ENCODE measurements at regions of chr10 and their contacts with region 1.

Region 1: DNA sequence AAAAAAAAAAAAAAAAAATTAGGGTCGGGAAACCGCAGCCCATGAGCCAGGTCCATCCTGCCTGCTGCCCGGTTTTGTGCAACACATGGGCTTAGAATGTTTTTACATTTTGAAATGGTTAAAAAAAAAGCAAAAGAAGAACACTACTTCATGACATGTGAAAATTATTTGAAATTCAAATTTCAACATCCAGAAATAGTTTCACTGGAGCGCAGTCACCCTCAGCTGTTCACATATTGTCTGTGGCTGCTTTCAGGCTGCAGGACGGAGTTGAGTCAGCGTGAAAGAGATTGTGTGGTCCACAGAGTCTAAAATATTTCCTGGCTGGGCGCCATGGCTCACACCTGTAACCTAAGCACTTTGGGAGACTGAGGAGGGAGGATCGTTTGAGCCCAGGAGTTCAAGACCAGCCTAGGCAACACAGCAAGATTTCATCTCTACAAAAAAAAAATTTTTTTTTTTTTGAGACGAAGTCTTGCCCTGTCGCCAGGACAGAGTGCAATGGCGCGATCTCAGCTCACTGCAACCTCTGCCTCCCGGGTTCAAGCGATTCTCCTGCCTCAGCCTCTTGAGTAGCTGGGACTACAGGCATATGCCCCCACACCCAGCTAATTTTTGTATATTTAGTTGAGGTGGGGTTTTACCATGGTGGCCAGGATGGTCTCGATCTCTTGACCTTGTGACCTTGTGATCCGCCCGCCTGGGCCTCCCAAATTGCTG is 63.9 kb upstream of the ECHDC3 start:
- DNase-seq: peak in 1 of 2 experiments; percentile 45
- H3K4me3 ChIP-seq: no peak overlapping the region
- H3K27ac ChIP-seq: no peak overlapping the region
- H3K4me1 ChIP-seq: no peaks in the 10 kb centered on the region
- H3K27me3 ChIP-seq: no peaks in the 10 kb centered on the region
- CTCF ChIP-seq: no peak

Region 2: DNA sequence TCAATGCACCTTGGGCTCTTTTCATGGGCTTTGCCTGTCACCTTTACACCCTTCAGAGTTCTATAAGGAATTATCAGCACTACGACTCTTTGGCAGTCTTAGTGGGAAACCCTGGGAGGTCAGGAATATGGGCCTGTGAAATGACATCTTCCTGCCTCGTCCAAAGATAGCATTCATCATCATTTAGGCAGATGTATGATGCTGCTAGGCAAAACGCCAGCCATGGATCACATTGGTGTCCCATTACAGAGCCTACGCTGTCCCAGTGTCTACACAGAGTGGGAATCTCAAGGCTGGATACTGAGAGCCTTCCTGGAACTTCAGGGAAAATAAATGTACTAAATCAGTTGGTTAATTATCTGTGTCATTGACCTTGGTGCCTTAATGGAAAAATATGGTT is 919.9 kb before region 1 on chr10:
- CTCF ChIA-PET with region 1: interaction called, 15 read pairs
- POLR2A ChIA-PET with region 1: no interaction called
- intact Hi-C with region 1: no loop called
- DNase-seq: no peak
- H3K4me3 ChIP-seq: no peak overlapping the region
- H3K27ac ChIP-seq: no peak overlapping the region
- H3K4me1 ChIP-seq: no peaks in the 10 kb centered on the region
- H3K27me3 ChIP-seq: no peaks in the 10 kb centered on the region
- CTCF ChIP-seq: no peak

Region 3: DNA sequence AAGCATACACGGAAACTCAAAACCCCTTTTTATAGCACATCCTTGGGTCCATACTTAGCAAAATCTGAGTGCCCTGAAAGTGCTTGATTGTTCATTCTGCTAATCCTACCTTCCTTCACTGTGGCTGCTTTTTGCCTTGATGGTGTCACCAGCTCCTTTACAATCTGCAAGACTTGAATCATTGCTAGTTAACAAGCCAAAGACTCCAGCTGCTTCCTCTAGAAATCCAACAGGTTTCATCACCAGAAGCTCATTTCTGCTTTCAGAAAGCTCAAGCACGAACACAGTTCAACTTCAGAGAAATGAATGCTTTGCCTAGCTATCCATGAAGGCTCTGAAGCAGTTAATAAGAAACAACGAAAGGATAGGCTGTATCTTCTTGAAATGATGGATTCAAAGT is 104.7 kb before region 1 on chr10:
- CTCF ChIA-PET with region 1: no interaction called
- POLR2A ChIA-PET with region 1: no interaction called
- intact Hi-C with region 1: no loop called
- DNase-seq: no peak
- H3K4me3 ChIP-seq: no peak overlapping the region
- H3K27ac ChIP-seq: no peak overlapping the region
- H3K4me1 ChIP-seq: no peaks in the 10 kb centered on the region
- H3K27me3 ChIP-seq: no peaks in the 10 kb centered on the region
- CTCF ChIP-seq: no peak

Region 4: DNA sequence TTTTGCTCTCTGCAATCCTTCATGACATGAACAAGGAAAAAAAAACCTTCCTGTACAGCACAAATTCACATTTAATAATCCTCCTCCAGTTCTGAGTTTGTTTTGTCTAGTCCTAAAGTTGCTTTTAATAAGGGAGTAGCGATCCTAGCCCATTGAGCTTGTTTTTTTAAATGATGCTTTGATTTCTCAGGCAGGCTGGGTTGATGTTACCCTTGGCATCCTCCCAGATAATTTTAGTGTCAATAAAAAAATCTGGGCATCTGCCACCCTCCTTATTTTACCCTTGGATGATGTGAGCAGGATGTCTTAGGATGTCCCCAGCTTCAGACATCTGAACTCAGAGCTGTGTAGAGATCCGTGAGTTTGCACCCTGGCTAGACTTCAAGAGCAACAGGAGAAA is 111.1 kb after region 1 on chr10:
- CTCF ChIA-PET with region 1: no interaction called
- POLR2A ChIA-PET with region 1: no interaction called
- intact Hi-C with region 1: no loop called
- DNase-seq: no peak
- H3K4me3 ChIP-seq: no peak overlapping the region
- H3K27ac ChIP-seq: no peak overlapping the region
- H3K4me1 ChIP-seq: peaks cover 9% of the 10 kb centered on the region
- H3K27me3 ChIP-seq: no peaks in the 10 kb centered on the region
- CTCF ChIP-seq: no peak

Measured in PC-9 (cell line).